Activated T-helper 1 cell treated with anti-CD3 and anti-CD28 coated beads, Interleukin-12 subunit alpha, Interleukin-12 subunit beta, Interleukin-2, Interleukin-4 antibody, amounts not matched to agents 30 ng/mL and 10 ng/mL and 1 ng/mL, durations not matched to agents 14 hours and 24 hours and 36 hours (primary cell): ENCODE measurements at regions of chr6 and their contacts with region 1.

Region 1: DNA sequence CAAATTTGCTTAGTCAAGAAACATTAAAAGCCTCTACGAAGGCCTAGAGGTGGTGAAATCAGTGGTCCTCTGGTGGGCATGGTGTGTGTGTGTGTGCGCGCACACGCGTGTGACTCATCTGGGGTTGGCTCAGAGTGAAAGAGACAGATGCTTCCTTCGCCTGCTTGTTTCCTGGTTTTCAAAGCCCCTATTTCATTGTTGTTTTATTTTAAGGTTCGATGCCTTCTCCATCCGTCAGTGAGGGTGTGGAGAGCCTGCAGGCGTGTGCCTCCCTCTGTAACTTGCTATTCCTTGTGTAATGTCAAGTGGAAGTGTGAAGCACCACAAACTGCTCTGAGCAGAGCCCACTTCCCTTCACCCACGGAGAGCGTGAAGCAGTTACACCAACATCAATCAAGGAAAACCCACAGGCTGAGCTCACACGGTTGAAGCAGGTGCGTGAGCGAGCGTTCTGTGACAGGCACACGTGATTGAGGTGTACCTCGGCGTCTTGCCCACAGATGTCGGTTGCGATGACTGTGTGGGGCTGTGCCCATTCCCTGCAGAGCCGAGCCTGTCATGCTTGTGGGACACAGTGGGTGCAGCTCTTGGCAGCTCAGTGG is 233.9 kb downstream of the PRL start:
- DNase-seq: peak; percentile 48
- H3K4me3 Mint-ChIP-seq: peak overlapping the region; percentile 52
- H3K27ac Mint-ChIP-seq: peak overlapping the region; percentile 56
- H3K4me1 Mint-ChIP-seq: peaks cover 25% of the 10 kb centered on the region
- H3K27me3 Mint-ChIP-seq: peaks cover 3% of the 10 kb centered on the region

Region 2: GRCh38 chr6:20202324-20202658 is 1860.6 kb before region 1 on chr6:
- intact Hi-C with region 1: loop called (anchors 10 kb)
- DNase-seq: no peak
- H3K4me3 Mint-ChIP-seq: no peak overlapping the region
- H3K27ac Mint-ChIP-seq: peak overlapping the region; percentile 30
- H3K4me1 Mint-ChIP-seq: peaks cover 77% of the 10 kb centered on the region
- H3K27me3 Mint-ChIP-seq: no peaks in the 10 kb centered on the region

Region 3: DNA sequence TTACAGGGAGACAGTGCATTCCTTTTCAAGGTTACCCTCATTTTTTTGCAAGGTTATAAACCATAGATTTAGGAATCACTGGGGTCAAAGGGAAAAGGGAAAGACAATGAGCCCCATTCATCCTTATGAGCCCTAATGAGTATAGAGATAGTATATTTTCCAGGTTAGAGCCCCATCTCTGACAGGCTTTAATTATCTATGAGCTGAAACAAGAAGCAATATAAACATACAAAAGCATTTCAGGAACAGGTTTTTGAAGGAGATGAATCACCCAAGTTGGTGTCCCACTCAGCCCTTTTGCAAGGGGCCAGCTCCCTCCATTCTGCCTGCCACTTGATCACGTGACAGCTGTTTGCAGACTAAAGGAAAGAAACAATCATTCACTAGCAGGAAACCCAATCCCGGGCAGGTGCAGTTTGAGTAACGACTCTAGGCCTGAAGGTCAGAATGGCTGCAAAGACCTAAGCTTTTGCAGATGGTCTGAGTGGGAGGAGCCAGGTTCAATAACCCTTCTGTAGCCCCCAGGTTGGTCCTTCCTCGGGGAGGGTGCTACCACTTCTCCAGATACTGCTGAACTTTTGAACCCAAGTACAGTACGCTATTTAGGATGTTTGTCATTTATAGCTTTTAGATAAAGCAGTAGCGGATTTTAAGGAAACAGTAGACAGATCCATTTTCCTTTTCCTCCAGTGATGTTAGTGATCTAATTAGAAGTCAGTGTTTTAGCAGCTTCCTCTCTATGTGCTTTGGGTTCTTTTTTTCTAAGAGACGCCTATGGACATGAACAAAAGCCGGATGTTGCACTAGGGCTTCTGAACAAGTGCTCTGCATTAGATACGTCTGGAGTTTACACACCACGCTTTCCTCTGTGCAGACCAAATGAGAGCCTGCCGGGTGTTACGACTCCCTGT is 216.1 kb before region 1 on chr6:
- intact Hi-C with region 1: loop called (anchors 10 kb)
- DNase-seq: no peak
- H3K4me3 Mint-ChIP-seq: no peak overlapping the region
- H3K27ac Mint-ChIP-seq: peak overlapping the region; percentile 13
- H3K4me1 Mint-ChIP-seq: peaks cover 21% of the 10 kb centered on the region
- H3K27me3 Mint-ChIP-seq: no peaks in the 10 kb centered on the region

Region 4: GRCh38 chr6:21928827-21929226 is 134.1 kb before region 1 on chr6:
- intact Hi-C with region 1: loop called (anchors 5 kb)
- DNase-seq: no peak
- H3K4me3 Mint-ChIP-seq: no peak overlapping the region
- H3K27ac Mint-ChIP-seq: no peak overlapping the region
- H3K4me1 Mint-ChIP-seq: peaks cover 33% of the 10 kb centered on the region
- H3K27me3 Mint-ChIP-seq: no peaks in the 10 kb centered on the region

Region 5: GRCh38 chr6:22079783-22080182 is 16.9 kb after region 1 on chr6:
- intact Hi-C with region 1: no loop called
- DNase-seq: no peak
- H3K4me3 Mint-ChIP-seq: no peak overlapping the region
- H3K27ac Mint-ChIP-seq: no peak overlapping the region
- H3K4me1 Mint-ChIP-seq: no peaks in the 10 kb centered on the region
- H3K27me3 Mint-ChIP-seq: peaks cover 2% of the 10 kb centered on the region